HAP-1 (cell line): ENCODE measurements at regions of chr4 and their contacts with region 1.

Region 1: DNA sequence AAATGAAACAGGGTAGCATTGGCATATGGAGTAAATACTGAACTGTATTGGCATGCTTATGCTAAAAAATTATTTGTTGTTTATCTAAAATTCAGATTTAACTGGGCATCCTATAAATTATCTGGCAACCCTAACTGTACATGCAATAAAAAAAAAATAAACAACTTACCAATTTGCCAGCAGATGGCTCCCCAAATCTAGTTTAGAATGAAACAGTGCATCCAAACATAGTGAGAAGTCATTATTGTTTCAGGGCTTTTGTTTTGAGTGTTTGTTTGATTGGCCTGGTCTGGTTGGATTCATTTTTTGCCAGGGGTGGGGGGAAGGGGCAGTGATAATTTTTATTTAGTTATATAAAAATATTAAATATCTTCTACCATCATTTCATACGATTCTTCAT is 12.8 kb upstream of the NSUN7 start:
- DNase-seq: peak in 1 of 2 experiments; percentile 28
- H3K4me3 ChIP-seq: no peak overlapping the region
- H3K4me1 ChIP-seq: peaks cover 3% of the 10 kb centered on the region
- H3K27me3 ChIP-seq: no peaks in the 10 kb centered on the region

Region 2: GRCh38 chr4:40897557-40898203 is 160.8 kb after region 1 on chr4:
- in situ Hi-C with region 1: loop called (anchors 10 kb)
- DNase-seq: peak; percentile 76 to 93
- H3K4me3 ChIP-seq: peak overlapping the region; percentile 13; the same call in 1 of the 2 replicates
- H3K4me1 ChIP-seq: 0 out of 2 replicates have a peak, but pooled peaks cover 3% of the 10 kb centered on the region
- H3K27me3 ChIP-seq: no peaks in the 10 kb centered on the region